ENCODE measurements at regions of chr9 and their contacts with region 1.

Region 1: DNA sequence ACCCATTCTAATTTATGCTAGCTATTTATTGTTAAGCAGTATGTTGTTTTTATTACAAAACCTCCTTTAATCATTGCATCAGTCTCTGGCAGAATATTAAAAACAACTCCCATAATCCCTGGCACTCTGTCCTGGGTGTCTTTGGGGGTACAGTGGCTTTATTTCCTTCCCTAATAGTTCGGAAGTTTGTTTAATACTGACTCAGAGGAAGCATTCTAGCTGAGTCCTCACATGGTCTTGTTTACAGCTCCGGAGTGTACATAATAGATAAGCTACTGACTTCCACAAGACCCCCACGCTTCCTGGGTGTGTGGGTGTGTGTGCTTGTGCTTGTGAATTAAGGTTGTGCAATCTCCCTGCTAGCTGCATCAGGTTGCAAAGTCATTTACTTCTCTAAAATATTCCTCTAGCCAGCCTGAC is 149.8 kb upstream of the CDKN2B start:
- DNase-seq: peak; percentile 87
- ATAC-seq: peak; percentile 91
- H3K4me3 ChIP-seq: peak overlapping the region; percentile 13; the same call in 1 of the 2 replicates
- H3K27ac ChIP-seq: peak overlapping the region; percentile 94
- H3K4me1 ChIP-seq: peaks cover 36% of the 10 kb centered on the region
- H3K27me3 ChIP-seq: no peaks in the 10 kb centered on the region
- CTCF ChIP-seq: no peak

Region 2: GRCh38 chr9:22008736-22009562 is 150.0 kb before region 1 on chr9 and contains the start of gene CDKN2B:
- CTCF ChIA-PET with region 1: no interaction called
- POLR2A ChIA-PET with region 1: interaction called, 9 read pairs
- intact Hi-C with region 1: loop called (anchors 5 kb)
- DNase-seq: peak; percentile 95
- ATAC-seq: peak; percentile 89
- H3K4me3 ChIP-seq: peak within 1 kb of the TSS; percentile 87
- H3K27ac ChIP-seq: peak within 1 kb of the TSS; percentile 90
- H3K4me1 ChIP-seq: peaks cover 9% of the 10 kb centered on the region
- H3K27me3 ChIP-seq: no peaks in the 10 kb centered on the region
- CTCF ChIP-seq: peak; percentile 83
- total RNA-seq, gene CDKN2B: 32.2 and 32.7 TPM in 2 replicates

Region 3: DNA sequence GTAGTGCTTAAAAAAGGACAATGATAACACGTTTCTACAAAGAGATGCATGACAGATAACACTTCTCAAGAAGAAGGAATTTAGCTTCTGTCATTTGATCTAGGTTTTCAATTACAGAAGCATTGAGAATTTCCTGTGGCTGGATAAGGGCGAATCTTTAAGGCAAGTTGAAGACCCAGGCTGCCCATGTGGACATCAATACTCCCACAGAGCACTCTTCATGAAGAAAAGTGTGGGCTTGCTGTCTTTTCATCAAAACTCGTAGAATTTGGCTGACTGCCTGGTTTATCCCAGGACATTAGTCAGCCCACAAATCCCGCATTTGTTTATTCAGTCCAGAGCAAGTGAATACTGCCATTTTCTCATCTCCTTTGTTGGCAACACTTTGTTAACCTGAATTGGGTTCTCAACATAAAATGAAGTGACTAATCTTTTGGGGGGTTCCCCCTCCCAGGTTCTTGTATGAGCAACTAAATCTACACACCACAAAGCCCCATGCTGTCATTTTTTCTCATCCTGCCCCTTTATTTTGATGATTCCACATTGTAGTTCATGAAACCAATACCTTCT is 106.5 kb before region 1 on chr9:
- CTCF ChIA-PET with region 1: no interaction called
- POLR2A ChIA-PET with region 1: interaction called, 6 read pairs
- intact Hi-C with region 1: loop called (anchors 1 kb)
- DNase-seq: peak; percentile 98
- ATAC-seq: peak; percentile 84
- H3K4me3 ChIP-seq: peak overlapping the region; percentile 47; the same call in 1 of the 2 replicates
- H3K27ac ChIP-seq: peak overlapping the region; percentile 100
- H3K4me1 ChIP-seq: peaks cover 56% of the 10 kb centered on the region
- H3K27me3 ChIP-seq: no peaks in the 10 kb centered on the region
- CTCF ChIP-seq: no peak

Region 4: DNA sequence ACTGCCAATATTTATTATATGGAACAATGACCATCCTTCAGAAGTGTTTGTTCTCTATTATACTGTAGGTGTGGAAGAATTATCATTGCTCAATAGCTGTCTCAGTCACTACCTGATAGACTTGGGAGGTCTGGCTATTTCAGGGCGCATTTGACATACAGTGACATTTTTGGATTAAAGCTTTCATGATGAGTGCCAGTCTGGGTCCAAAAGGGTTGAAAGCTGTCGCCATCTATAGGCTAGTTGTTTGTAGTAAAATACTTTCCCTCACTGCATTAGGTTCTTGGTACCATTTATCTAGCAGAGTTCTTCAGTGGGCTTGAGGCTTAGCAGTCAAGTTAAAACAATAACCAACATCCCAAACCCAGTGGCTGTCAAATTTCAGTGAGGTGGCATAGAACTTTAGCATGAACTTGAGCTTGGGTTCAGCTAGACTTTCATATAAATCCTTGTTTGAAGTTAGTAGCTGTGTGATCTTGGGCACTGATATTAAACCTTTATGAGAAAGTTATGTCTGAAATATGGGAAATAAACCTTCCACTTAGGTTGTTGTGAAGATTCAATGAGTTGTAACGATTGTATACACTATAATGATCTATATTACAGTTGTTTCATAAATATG is 39.3 kb before region 1 on chr9:
- CTCF ChIA-PET with region 1: interaction called, 3 read pairs
- POLR2A ChIA-PET with region 1: no interaction called
- intact Hi-C with region 1: loop called (anchors 1 kb)
- DNase-seq: peak; percentile 61
- ATAC-seq: no peak
- H3K4me3 ChIP-seq: no peak overlapping the region
- H3K27ac ChIP-seq: peak overlapping the region; percentile 95; the same call in 1 of the 2 replicates
- H3K4me1 ChIP-seq: peaks cover 47% of the 10 kb centered on the region
- H3K27me3 ChIP-seq: no peaks in the 10 kb centered on the region
- CTCF ChIP-seq: peak; percentile 64

Region 5: DNA sequence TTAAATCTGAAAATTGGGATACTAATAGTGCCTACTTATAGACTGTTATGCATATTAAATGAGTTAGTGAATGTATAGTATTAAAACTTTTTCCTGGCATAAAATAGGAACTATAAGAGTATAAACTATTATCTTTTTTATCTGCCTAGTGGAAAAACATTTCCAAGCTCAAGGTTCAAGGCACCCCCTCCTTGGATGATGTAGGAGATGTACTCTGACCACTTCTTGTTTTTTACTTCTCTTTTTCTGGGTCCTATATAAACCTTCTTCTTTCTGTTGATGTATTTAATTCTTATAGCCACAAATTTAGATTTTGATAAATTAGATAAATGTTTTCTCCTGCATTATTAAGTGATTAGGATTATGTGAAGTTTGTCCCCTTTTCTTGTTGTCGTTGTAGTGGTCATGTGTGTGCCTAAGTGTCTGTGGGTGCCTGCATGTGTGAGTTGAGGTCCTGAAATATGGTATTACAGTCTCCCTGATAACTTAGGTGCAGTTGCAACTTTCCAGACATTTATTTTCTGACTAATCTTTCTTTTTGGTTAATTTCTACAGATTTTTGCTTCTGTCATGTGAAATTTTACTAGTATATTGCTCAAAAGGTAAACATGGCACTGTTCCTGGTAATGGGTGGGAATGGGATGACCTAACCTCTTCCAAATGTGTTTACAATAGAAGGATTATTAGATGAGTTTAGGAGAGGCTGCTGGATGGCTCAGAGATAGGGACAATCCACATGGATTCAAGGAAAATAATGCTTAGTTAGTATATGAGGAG is 11.0 kb after region 1 on chr9:
- CTCF ChIA-PET with region 1: no interaction called
- POLR2A ChIA-PET with region 1: no interaction called
- intact Hi-C with region 1: loop called (anchors 1 kb)
- DNase-seq: peak; percentile 78
- ATAC-seq: peak; percentile 88
- H3K4me3 ChIP-seq: peak overlapping the region; percentile 1; the same call in 1 of the 2 replicates
- H3K27ac ChIP-seq: peak overlapping the region; percentile 97
- H3K4me1 ChIP-seq: peaks cover 45% of the 10 kb centered on the region
- H3K27me3 ChIP-seq: no peaks in the 10 kb centered on the region
- CTCF ChIP-seq: no peak

Region 6: DNA sequence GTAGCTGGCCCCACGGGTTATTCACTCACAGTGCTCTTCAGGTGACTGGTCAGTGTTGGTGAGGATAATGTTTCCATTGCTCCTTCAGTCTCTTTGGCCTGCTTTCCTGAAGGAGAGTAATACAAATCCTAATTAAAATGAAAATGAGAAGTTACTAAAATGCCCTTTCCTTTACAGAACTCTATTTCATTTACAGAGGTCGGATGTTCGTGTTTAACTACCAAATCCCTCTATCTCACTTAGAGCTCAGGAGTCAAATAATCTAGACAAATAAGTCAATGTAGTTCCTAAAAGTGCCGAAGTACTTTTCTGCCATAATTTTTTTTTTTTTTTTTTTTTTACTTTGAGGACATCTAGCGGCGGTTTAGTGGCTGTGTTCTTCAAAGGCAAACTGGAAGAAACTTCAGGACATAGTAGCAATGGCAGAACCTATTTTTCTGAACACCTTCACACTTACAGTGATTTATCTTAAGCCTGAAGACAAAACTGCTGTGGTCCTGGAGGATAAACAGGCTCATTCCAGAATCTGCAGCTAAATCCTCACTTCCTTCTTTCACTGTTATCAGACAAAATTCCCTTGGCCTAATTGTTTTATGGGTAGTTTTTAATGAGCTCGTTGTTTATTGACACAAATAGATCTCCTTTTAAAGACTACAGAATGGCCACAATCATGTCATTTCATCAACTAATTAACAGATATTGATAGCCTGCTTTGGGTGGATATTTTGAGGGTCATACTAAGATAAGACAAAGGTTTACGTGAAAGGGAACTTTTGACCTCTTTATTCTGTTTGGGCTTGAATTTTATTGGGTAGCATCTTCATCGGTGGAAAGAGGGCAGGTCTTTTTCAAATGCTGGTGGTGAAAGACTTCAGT is 80.1 kb after region 1 on chr9:
- CTCF ChIA-PET with region 1: interaction called, 13 read pairs
- POLR2A ChIA-PET with region 1: interaction called, 7 read pairs
- intact Hi-C with region 1: loop called (anchors 1 kb)
- DNase-seq: peak; percentile 51
- ATAC-seq: peak; percentile 42
- H3K4me3 ChIP-seq: peak overlapping the region; percentile 53; the same call in 1 of the 2 replicates
- H3K27ac ChIP-seq: peak overlapping the region; percentile 89
- H3K4me1 ChIP-seq: peaks cover 47% of the 10 kb centered on the region
- H3K27me3 ChIP-seq: no peaks in the 10 kb centered on the region
- CTCF ChIP-seq: peak; percentile 57

Measured in PC-3 (cell line).